ENCODE measurements at regions of chr2 and their contacts with region 1.

Region 1: GRCh38 chr2:177148477-177149154 is 64.0 kb upstream of the HNRNPA3 start:
- DNase-seq: peak; percentile 83
- ATAC-seq: peak; percentile 96
- H3K4me3 Mint-ChIP-seq: peak overlapping the region; percentile 76
- H3K27ac Mint-ChIP-seq: peak overlapping the region; percentile 53
- H3K4me1 Mint-ChIP-seq: peaks cover 13% of the 10 kb centered on the region
- H3K27me3 Mint-ChIP-seq: peaks cover 42% of the 10 kb centered on the region

Region 2: DNA sequence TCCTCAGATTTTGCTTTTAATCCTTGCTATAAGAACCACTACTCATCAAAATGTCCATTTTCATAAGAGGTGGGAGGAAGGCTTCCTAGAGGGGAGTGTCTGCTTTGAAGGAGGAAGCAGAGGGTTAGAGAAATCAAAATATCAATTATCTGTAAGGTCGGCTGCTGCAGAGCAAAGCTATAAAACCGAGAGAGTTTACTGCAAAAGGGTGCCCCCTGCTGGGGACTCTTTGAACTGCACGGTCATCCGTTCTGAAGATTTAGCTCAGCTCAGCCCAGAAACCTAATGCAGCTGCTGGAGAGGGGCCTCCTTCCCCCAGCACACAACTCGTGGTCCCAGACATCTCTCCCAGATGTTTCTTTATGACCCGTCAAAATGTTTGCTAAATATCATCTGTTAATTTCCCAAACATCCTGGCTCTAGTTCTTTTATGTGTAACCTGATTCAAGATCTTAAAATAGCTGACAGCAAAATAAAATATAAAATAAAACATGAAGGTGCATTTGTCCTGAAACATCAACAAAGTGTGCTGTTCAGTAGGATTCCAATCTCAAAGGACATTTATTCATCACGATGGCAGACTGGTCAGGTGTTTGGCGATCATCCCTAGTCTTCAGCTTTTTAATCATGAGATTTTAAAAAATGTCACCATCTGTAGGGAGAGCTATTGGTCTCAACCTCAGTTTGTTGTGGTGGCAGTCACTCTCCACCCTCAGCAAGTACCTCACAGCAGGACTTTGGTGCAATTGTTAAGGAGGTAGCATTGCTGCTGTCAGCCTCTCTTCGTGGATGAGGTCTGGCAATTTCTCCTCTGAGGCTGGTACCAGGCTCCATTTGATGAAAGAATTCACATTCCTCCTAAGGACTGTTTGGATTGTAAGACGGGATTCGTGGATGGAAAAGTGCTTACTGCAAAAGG is 693.5 kb before region 1 on chr2:
- CTCF ChIA-PET with region 1: interaction called, 12 read pairs
- POLR2A ChIA-PET with region 1: no interaction called
- DNase-seq: peak; percentile 87
- ATAC-seq: peak; percentile 65
- H3K4me3 Mint-ChIP-seq: no peak overlapping the region
- H3K27ac Mint-ChIP-seq: no peak overlapping the region
- H3K4me1 Mint-ChIP-seq: no peaks in the 10 kb centered on the region
- H3K27me3 Mint-ChIP-seq: peaks cover 14% of the 10 kb centered on the region

Region 3: DNA sequence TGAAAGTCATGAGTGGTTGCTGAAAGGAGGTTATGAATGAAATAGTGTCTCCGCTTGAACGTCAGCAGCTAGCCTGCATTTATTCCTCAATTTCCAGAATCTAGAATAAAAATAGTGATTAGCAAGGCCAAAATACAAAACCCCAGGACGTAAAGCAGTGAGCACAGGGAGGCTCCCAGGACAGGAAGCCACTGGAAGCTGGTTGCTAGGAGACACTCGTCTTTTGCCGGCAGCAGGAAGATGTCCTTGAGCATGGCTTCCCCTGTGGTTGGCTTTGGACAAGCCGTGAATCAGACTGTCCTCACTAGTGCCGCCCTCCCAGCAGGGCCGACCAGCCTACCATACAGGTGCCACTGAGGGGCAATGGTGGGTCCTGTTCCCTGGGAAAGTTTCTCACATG is 505.0 kb before region 1 on chr2:
- CTCF ChIA-PET with region 1: interaction called, 19 read pairs
- POLR2A ChIA-PET with region 1: no interaction called
- DNase-seq: no peak
- ATAC-seq: no peak
- H3K4me3 Mint-ChIP-seq: no peak overlapping the region
- H3K27ac Mint-ChIP-seq: no peak overlapping the region
- H3K4me1 Mint-ChIP-seq: peaks cover 8% of the 10 kb centered on the region
- H3K27me3 Mint-ChIP-seq: peaks cover 66% of the 10 kb centered on the region

Region 4: GRCh38 chr2:176814306-176815052 is 334.1 kb before region 1 on chr2:
- CTCF ChIA-PET with region 1: interaction called, 68 read pairs
- POLR2A ChIA-PET with region 1: no interaction called
- DNase-seq: peak; percentile 40
- ATAC-seq: no peak
- H3K4me3 Mint-ChIP-seq: no peak overlapping the region
- H3K27ac Mint-ChIP-seq: no peak overlapping the region
- H3K4me1 Mint-ChIP-seq: peaks cover 30% of the 10 kb centered on the region
- H3K27me3 Mint-ChIP-seq: no peaks in the 10 kb centered on the region

Region 5: GRCh38 chr2:176931588-176932563 is 216.7 kb before region 1 on chr2:
- CTCF ChIA-PET with region 1: interaction called, 10 read pairs
- POLR2A ChIA-PET with region 1: no interaction called
- DNase-seq: peak; percentile 57
- ATAC-seq: peak; percentile 96
- H3K4me3 Mint-ChIP-seq: peak overlapping the region; percentile 40
- H3K27ac Mint-ChIP-seq: peak overlapping the region; percentile 86
- H3K4me1 Mint-ChIP-seq: peaks cover 23% of the 10 kb centered on the region
- H3K27me3 Mint-ChIP-seq: no peaks in the 10 kb centered on the region

Region 6: GRCh38 chr2:176960721-176961120 is 187.9 kb before region 1 on chr2:
- CTCF ChIA-PET with region 1: no interaction called
- POLR2A ChIA-PET with region 1: no interaction called
- DNase-seq: no peak
- ATAC-seq: no peak
- H3K4me3 Mint-ChIP-seq: no peak overlapping the region
- H3K27ac Mint-ChIP-seq: no peak overlapping the region
- H3K4me1 Mint-ChIP-seq: no peaks in the 10 kb centered on the region
- H3K27me3 Mint-ChIP-seq: peaks cover 29% of the 10 kb centered on the region

Region 7: DNA sequence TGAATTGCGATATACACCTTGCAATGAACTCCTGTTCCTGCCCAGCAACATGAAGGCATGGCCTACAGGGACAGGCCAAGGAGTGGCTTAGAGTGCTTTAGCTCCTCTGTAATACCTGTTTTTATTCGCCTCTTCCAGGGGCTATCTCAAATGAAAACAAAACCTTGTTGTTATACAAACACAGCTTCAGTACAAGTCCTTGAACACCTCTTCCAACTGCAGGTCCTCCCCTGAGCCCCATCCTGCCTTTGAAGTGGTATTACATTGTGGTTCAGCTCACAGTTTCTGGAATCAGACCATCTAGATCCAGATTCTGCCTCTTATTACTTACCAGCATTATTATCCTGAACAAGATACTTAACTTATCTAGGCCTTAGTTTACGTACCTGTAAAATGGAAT is 19.0 kb before region 1 on chr2:
- CTCF ChIA-PET with region 1: interaction called, 11 read pairs
- POLR2A ChIA-PET with region 1: no interaction called
- DNase-seq: no peak
- ATAC-seq: peak; percentile 47
- H3K4me3 Mint-ChIP-seq: no peak overlapping the region
- H3K27ac Mint-ChIP-seq: no peak overlapping the region
- H3K4me1 Mint-ChIP-seq: peaks cover 14% of the 10 kb centered on the region
- H3K27me3 Mint-ChIP-seq: peaks cover 7% of the 10 kb centered on the region